Psoas muscle (tissue), 8 donors: ENCODE measurements at regions of chr6 and their contacts with region 1.

Region 1: GRCh38 chr6:3742426-3743344 is 8.8 kb downstream of the PXDC1 start:
- DNase-seq: peak; percentile 84 to 91
- ATAC-seq: peak; percentile 66 to 83 (median 70)
- H3K4me3 ChIP-seq: peak overlapping the region; percentile 54
- H3K27ac ChIP-seq: peak overlapping the region; percentile 91
- H3K4me1 ChIP-seq: peaks cover 75% of the 10 kb centered on the region
- H3K27me3 ChIP-seq: no peaks in the 10 kb centered on the region
- CTCF ChIP-seq: peak; percentile 96

Region 2: DNA sequence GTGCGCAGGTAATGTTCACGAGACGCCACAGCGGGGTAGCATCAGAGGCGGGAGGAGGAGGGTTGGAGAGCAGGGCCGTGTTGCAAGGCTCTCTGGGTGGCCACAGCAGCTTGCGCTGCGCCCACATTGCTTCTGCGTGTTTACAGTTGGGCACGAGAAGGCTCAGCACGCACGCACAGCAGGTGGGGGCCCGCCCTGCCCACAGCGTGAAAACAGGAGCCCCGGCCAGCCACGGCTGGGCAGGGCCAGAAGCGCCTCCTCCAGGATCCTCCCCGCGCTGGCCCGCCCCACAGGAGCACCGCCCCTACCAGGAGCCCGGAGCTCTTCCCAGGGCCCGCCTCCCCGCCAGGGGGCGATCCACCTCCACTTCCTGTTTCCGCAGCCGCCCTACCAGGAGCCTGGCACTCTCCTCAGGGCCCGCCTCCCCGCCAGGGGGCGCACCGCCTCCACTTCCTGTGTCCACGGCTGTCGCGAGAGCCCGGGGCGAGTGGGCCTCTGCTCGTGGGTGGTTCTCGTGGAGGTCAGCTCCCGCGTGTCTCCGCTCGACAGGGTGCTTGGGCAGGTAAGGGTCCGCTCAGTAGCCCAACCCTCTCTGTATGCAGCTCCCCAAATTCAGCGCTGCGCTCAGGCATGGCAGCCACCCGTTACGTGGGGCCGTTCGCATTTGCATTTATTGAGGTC is 106.4 kb after region 1 on chr6 and contains the start of gene FAM50B:
- intact Hi-C with region 1: loop called (anchors 2 to 5 kb)
- DNase-seq: peak; percentile 93 to 97
- ATAC-seq: peak; percentile 93 to 99 (median 94)
- H3K4me3 ChIP-seq: peak within 1 kb of the TSS; percentile 66
- H3K27ac ChIP-seq: peak within 1 kb of the TSS; percentile 82
- H3K4me1 ChIP-seq: no peaks in the 10 kb centered on the region
- H3K27me3 ChIP-seq: no peaks in the 10 kb centered on the region
- CTCF ChIP-seq: peak; percentile 93
- total RNA-seq, gene FAM50B: 10.8 to 19.6 (median 12.4) TPM

Region 3: GRCh38 chr6:3929281-3929798 is 186.7 kb after region 1 on chr6:
- intact Hi-C with region 1: loop called (anchors 1 to 5 kb)
- DNase-seq: peak; percentile 61 to 69
- ATAC-seq: peak in 2 of 4 donors; percentile 6 to 56
- H3K4me3 ChIP-seq: no peak overlapping the region
- H3K27ac ChIP-seq: peak overlapping the region; percentile 84
- H3K4me1 ChIP-seq: peaks cover 37% of the 10 kb centered on the region
- H3K27me3 ChIP-seq: no peaks in the 10 kb centered on the region
- CTCF ChIP-seq: no peak

Region 4: DNA sequence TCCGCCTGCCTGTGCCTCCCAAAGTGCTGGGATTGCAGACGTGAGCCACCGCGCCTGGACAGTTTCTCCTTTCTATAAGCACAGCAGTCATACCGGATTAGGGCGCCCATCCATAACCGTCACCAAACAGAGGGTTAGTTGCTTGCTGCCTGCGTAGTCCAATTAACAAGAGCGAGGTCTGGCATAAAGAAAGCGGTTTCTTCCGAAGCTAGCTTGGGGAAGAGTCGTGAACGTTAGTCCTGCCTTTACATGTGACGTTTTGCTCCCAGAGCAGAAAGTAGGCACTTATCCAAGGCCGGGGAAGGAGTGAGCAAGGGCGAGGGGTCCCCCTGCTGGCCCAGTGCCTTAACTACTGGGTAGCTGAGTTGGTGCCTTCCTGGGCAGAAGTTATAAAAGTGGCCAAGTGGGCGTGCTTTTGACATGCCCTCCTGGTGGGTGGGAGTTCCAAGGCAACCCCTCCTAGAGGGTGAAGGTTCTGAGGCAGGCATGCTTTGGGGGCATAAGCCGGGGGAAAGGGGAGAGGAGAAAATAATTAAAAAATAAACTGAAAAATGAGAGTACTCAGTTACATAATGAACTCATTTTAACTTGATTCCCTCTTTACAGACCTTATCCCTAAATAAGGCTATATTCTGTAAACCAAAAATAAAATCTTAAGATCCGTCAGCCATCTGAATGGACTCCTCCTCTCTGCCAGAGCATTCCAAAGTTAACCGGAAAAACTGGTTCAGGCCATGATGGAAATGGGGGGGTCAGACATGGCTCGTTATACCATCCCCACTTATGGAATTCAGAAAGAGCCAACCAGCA is 248.2 kb after region 1 on chr6:
- intact Hi-C with region 1: loop called (anchors 5 kb)
- DNase-seq: peak; percentile 85 to 91
- ATAC-seq: peak; percentile 92 to 98 (median 95)
- H3K4me3 ChIP-seq: peak overlapping the region; percentile 63
- H3K27ac ChIP-seq: peak overlapping the region; percentile 53
- H3K4me1 ChIP-seq: peaks cover 17% of the 10 kb centered on the region
- H3K27me3 ChIP-seq: no peaks in the 10 kb centered on the region
- CTCF ChIP-seq: peak; percentile 72

Region 5: DNA sequence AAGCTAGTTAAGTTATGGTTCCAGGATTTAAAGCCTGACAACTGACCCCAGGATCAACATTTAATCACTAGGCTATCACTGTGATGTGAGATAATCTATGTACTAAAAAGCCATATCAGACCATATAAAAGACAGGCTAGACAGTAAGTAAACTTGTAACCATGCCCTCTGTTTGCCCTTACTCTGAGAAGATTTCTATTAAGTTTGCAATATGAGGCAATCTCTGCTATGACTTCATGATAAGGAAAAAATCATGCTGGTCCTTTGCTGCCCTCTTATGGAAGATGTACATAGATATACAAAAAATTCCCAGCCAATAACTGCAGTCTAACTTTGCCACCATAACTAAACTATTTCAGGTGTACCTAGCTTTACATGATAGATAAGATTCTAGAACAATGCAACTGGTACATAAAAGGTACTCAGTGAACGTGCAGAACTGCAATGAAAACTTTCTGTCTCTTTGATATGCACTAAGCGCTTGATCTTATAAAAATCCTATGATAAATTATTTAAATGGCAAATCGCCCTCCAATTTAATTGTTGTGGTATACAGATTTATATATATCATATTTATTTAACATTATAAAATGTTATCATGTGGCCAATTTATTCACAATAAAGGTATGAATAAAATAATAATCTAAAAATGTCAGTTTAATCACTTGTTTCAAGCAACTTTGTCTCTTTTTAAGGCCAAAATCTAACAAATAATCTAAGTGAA is 265.8 kb after region 1 on chr6:
- intact Hi-C with region 1: loop called in 1 of 2 experiments (anchors 5 kb)
- DNase-seq: no peak
- ATAC-seq: peak; percentile 86 to 94 (median 88)
- H3K4me3 ChIP-seq: no peak overlapping the region
- H3K27ac ChIP-seq: peak overlapping the region; percentile 62
- H3K4me1 ChIP-seq: peaks cover 18% of the 10 kb centered on the region
- H3K27me3 ChIP-seq: no peaks in the 10 kb centered on the region
- CTCF ChIP-seq: peak; percentile 63

Region 6: GRCh38 chr6:4135665-4136353 is 393.1 kb after region 1 on chr6:
- intact Hi-C with region 1: loop called in 1 of 2 experiments (anchors 10 kb)
- DNase-seq: peak; percentile 98 to 99
- ATAC-seq: peak; percentile 93 to 98 (median 96)
- H3K4me3 ChIP-seq: peak overlapping the region; percentile 87
- H3K27ac ChIP-seq: peak overlapping the region; percentile 79
- H3K4me1 ChIP-seq: peaks cover 21% of the 10 kb centered on the region
- H3K27me3 ChIP-seq: no peaks in the 10 kb centered on the region
- CTCF ChIP-seq: no peak